WTC11 (cell line): ENCODE measurements at regions of chr10 and their contacts with region 1.

Region 1: GRCh38 chr10:26725837-26726727 is 28.6 kb downstream of the PDSS1 start:
- DNase-seq: no peak
- ATAC-seq: peak; percentile 50; the same call in 1 of the 2 replicates
- H3K4me3 Mint-ChIP-seq: no peak overlapping the region
- H3K27ac Mint-ChIP-seq: no peak overlapping the region
- H3K4me1 Mint-ChIP-seq: no peaks in the 10 kb centered on the region
- H3K27me3 Mint-ChIP-seq: no peaks in the 10 kb centered on the region
- CTCF ChIP-seq: peak; percentile 67

Region 2: GRCh38 chr10:26407406-26408279 is 318.4 kb before region 1 on chr10:
- CTCF ChIA-PET with region 1: no interaction called
- POLR2A ChIA-PET with region 1: no interaction called
- DNase-seq: no peak
- ATAC-seq: no peak
- H3K4me3 Mint-ChIP-seq: no peak overlapping the region
- H3K27ac Mint-ChIP-seq: no peak overlapping the region
- H3K4me1 Mint-ChIP-seq: no peaks in the 10 kb centered on the region
- H3K27me3 Mint-ChIP-seq: no peaks in the 10 kb centered on the region
- CTCF ChIP-seq: no peak

Region 3: GRCh38 chr10:26714415-26715136 is 11.5 kb before region 1 on chr10:
- CTCF ChIA-PET with region 1: interaction called, 10 read pairs
- POLR2A ChIA-PET with region 1: no interaction called
- DNase-seq: no peak
- ATAC-seq: no peak
- H3K4me3 Mint-ChIP-seq: no peak overlapping the region
- H3K27ac Mint-ChIP-seq: no peak overlapping the region
- H3K4me1 Mint-ChIP-seq: no peaks in the 10 kb centered on the region
- H3K27me3 Mint-ChIP-seq: no peaks in the 10 kb centered on the region
- CTCF ChIP-seq: no peak

Region 4: GRCh38 chr10:26881600-26882331 is 155.7 kb after region 1 on chr10:
- CTCF ChIA-PET with region 1: interaction called, 83 read pairs
- POLR2A ChIA-PET with region 1: no interaction called
- DNase-seq: no peak
- ATAC-seq: peak; percentile 94
- H3K4me3 Mint-ChIP-seq: peak overlapping the region; percentile 41
- H3K27ac Mint-ChIP-seq: peak overlapping the region; percentile 17; the same call in 1 of the 2 replicates
- H3K4me1 Mint-ChIP-seq: no peaks in the 10 kb centered on the region
- H3K27me3 Mint-ChIP-seq: no peaks in the 10 kb centered on the region
- CTCF ChIP-seq: peak; percentile 31; the same call in 1 of the 2 replicates